ENCODE measurements at regions of chr11 and their contacts with region 1.

Region 1: DNA sequence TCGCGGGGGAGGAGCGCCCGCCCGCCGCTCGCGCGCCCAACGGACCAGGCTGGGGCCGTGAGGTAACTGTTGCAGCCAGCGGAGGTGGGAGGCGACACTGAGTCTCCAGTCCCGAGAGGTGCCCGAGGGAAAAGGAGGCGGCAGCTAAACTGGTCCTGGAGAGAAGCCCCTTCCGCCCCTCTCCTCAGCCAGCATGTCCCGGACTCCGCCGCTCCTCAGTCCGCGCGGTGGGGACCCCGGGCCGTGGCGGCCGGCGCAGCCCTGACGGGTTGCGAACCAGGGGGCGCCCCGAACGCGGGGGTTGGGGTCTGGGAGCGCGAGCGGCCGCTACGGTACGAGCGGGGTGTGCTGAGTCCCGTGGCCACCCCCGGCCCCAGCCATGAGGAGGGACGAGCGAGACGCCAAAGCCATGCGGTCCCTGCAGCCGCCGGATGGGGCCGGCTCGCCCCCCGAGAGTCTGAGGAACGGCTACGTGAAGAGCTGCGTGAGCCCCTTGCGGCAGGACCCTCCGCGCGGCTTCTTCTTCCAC is at the start of gene PDE3B:
- H3K4me3 ChIP-seq: peak within 1 kb of the TSS; percentile 89
- H3K27ac ChIP-seq: peak within 1 kb of the TSS; percentile 80
- H3K4me1 ChIP-seq: no peaks in the 10 kb centered on the region
- CTCF ChIP-seq: peak; percentile 40; the same call in 1 of the 2 replicates

Region 2: GRCh38 chr11:14892036-14892567 is 248.3 kb after region 1 on chr11 and contains the start of gene CYP2R1:
- CTCF ChIA-PET with region 1: interaction called, 3 read pairs
- POLR2A ChIA-PET with region 1: interaction called, 14 read pairs
- H3K4me3 ChIP-seq: peak within 1 kb of the TSS; percentile 62
- H3K27ac ChIP-seq: peak within 1 kb of the TSS; percentile 51; the same call in 1 of the 2 replicates
- H3K4me1 ChIP-seq: no peaks in the 10 kb centered on the region
- CTCF ChIP-seq: no peak; the same call in 1 of the 2 replicates

Measured in HEK293 (cell line).